ENCODE measurements at regions of chr2 and their contacts with region 1.

Region 1: GRCh38 chr2:20446917-20447436 is at the start of gene RHOB:
- DNase-seq: peak; percentile 96
- H3K4me3 ChIP-seq: peak within 1 kb of the TSS; percentile 91
- H3K27ac ChIP-seq: peak within 1 kb of the TSS; percentile 47
- H3K27me3 ChIP-seq: no peaks in the 10 kb centered on the region
- CTCF ChIP-seq: no peak
- polyA plus RNA-seq, gene RHOB: 45.5 and 47.7 TPM in 2 replicates

Region 2: DNA sequence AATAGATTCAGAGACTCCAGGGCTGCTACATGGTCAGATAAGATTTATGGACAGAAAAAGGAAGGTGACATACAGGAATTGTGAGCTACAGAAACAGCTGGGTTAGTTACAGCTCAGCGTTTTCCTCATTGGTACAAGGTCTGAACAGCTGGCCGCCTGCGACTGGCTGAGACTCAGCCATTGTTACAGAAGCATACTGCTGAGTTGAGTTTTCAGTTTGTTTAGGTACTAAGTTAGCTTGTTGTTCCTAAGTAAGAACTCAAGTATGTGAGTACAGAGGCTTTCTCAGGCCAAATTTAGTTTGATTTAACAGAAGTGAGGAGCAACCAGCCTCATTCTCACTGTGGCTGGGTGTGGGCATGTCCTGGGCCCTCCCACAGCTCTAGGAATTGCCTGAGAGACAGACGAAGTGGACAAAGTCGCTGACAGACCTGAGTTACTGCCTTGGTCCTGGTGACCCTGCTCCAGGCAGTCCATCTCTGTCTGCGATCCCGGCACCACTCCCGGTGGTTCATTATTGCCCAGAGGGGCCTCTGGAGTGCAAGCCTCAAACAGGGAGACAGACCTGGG is 27.9 kb before region 1 on chr2:
- CTCF ChIA-PET with region 1: interaction called, 71 read pairs
- POLR2A ChIA-PET with region 1: interaction called, 72 read pairs
- DNase-seq: peak; percentile 42
- H3K4me3 ChIP-seq: no peak overlapping the region
- H3K27ac ChIP-seq: peak overlapping the region; percentile 24
- H3K27me3 ChIP-seq: no peaks in the 10 kb centered on the region
- CTCF ChIP-seq: no peak

Region 3: DNA sequence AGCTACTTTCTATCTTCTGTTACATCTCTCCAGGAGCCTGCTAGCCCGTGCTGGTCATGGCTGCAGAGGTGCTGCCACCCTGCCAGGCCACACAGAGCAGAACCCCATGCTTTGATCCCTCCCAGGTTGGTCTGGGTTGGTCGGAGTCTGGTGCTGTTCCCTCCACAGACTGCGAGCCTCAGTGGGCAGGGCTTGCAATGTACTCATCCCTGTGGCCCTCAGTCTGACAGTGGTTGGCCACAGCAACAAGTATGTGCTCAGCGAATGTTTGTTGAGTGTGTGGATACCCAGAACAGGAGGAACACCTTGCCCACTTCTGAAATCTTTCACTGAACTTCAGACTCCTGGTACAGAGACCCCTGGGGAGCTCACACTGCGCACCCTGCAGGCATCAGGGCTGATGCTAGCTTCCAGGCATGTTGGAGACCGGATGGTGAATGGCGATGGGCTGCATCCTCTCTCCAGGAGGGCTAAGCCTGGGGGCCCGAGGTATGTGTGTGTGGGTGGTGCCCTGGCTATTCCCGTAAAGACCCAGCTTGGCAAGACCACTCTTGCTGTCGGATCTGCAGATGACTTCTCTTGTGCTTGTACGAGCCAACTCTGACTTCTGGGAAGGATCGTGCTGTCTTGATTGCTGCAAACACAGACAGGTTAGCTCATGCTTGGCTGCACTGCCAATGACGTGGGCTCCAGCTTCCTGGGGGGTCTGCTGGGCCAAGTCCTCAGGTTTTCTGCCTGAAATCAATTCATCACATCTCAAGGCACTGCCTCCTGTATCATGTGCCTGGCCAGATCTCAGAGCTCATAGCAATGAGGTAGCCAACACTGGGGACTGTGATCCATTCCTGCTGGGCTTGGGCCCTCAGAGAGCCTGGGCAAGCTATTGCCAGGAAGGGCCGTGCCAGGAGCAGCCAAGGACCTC is 43.5 kb after region 1 on chr2:
- CTCF ChIA-PET with region 1: interaction called, 3 read pairs
- POLR2A ChIA-PET with region 1: interaction called, 33 read pairs
- DNase-seq: peak; percentile 39
- H3K4me3 ChIP-seq: no peak overlapping the region
- H3K27ac ChIP-seq: no peak overlapping the region
- H3K27me3 ChIP-seq: peaks cover 3% of the 10 kb centered on the region
- CTCF ChIP-seq: no peak

Region 4: GRCh38 chr2:20561701-20562454 is 114.9 kb after region 1 on chr2:
- CTCF ChIA-PET with region 1: interaction called, 4 read pairs
- POLR2A ChIA-PET with region 1: interaction called, 14 read pairs
- DNase-seq: no peak
- H3K4me3 ChIP-seq: no peak overlapping the region
- H3K27ac ChIP-seq: no peak overlapping the region
- H3K27me3 ChIP-seq: peaks cover 9% of the 10 kb centered on the region
- CTCF ChIP-seq: no peak

Region 5: GRCh38 chr2:20595431-20596192 is 148.6 kb after region 1 on chr2:
- CTCF ChIA-PET with region 1: interaction called, 6 read pairs
- POLR2A ChIA-PET with region 1: interaction called, 27 read pairs
- DNase-seq: no peak
- H3K4me3 ChIP-seq: no peak overlapping the region
- H3K27ac ChIP-seq: peak overlapping the region; percentile 33
- H3K27me3 ChIP-seq: no peaks in the 10 kb centered on the region
- CTCF ChIP-seq: no peak

Region 6: GRCh38 chr2:20635675-20636584 is 189.0 kb after region 1 on chr2:
- CTCF ChIA-PET with region 1: interaction called, 83 read pairs
- POLR2A ChIA-PET with region 1: interaction called, 47 read pairs
- DNase-seq: peak; percentile 53
- H3K4me3 ChIP-seq: no peak overlapping the region
- H3K27ac ChIP-seq: no peak overlapping the region
- H3K27me3 ChIP-seq: no peaks in the 10 kb centered on the region
- CTCF ChIP-seq: peak; percentile 96

Measured in AG04450 (cell line).